H1 (cell line): ENCODE measurements at regions of chr3 and their contacts with region 1.

Region 1: DNA sequence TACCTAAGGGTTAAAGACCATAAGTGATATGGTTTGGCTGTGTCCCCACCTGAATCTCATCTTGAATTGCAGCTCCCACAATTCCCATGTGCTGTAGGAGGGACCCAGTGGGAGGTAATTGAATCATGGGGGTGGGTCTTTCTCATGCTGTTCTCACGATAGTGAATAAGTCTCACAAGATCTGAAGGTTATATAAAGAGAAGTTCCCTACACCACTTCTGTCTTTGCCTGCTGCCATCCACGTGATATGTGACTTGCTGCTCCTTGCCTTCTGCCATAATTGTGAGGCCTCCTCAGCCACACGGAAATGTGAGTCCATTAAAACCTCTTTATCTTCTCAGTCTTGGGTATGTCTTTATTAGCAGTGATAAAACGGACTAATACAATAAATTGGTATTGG is 75.0 kb upstream of the CADPS start:
- DNase-seq: no peak
- H3K4me3 ChIP-seq: peak overlapping the region; percentile 32 to 64 (median 48)
- H3K27ac ChIP-seq: peak overlapping the region; percentile 9; the same call in 1 of the 2 replicates
- H3K4me1 ChIP-seq: peaks cover 2 to 9% (median 5%) of the 10 kb centered on the region in 4 experiments; a peak in 5 of 7 replicates
- H3K27me3 ChIP-seq: no peaks in the 10 kb centered on the region
- CTCF ChIP-seq: no peak
- EP300 ChIP-seq: no peak
- POLR2A ChIP-seq: peak; percentile 43 to 64; a peak in 2 of 3 replicates
- RAD21 ChIP-seq: no peak

Region 2: GRCh38 chr3:62965311-62965710 is 15.1 kb after region 1 on chr3:
- CTCF ChIA-PET with region 1: no interaction called
- POLR2A ChIA-PET with region 1: interaction called, 21 read pairs
- DNase-seq: no peak
- H3K4me3 ChIP-seq: no peak overlapping the region
- H3K27ac ChIP-seq: no peak overlapping the region
- H3K4me1 ChIP-seq: peaks cover 0 to 6% (median 1%) of the 10 kb centered on the region in 4 experiments; a peak in 2 of 7 replicates
- H3K27me3 ChIP-seq: no peaks in the 10 kb centered on the region
- CTCF ChIP-seq: no peak
- EP300 ChIP-seq: no peak
- POLR2A ChIP-seq: no peak
- RAD21 ChIP-seq: no peak

Region 3: GRCh38 chr3:63043631-63044030 is 93.4 kb after region 1 on chr3:
- CTCF ChIA-PET with region 1: no interaction called
- POLR2A ChIA-PET with region 1: no interaction called
- DNase-seq: no peak
- H3K4me3 ChIP-seq: no peak overlapping the region
- H3K27ac ChIP-seq: no peak overlapping the region
- H3K4me1 ChIP-seq: peaks cover 0 to 6% (median 1%) of the 10 kb centered on the region in 4 experiments; a peak in 2 of 7 replicates
- H3K27me3 ChIP-seq: no peaks in the 10 kb centered on the region
- CTCF ChIP-seq: no peak
- EP300 ChIP-seq: no peak
- POLR2A ChIP-seq: no peak
- RAD21 ChIP-seq: no peak

Region 4: GRCh38 chr3:63135367-63135766 is 185.2 kb after region 1 on chr3:
- CTCF ChIA-PET with region 1: no interaction called
- POLR2A ChIA-PET with region 1: no interaction called
- DNase-seq: no peak
- H3K4me3 ChIP-seq: peak overlapping the region in 1 of 4 experiments; percentile 39; a peak in 1 of 8 replicates
- H3K27ac ChIP-seq: 0 out of 2 replicates have a peak overlapping the region, but pooled peaks have one; percentile 47
- H3K4me1 ChIP-seq: peaks cover 0 to 15% (median 5%) of the 10 kb centered on the region in 4 experiments; a peak in 5 of 7 replicates
- H3K27me3 ChIP-seq: no peaks in the 10 kb centered on the region
- CTCF ChIP-seq: no peak
- EP300 ChIP-seq: no peak
- POLR2A ChIP-seq: no peak
- RAD21 ChIP-seq: no peak